Heart right ventricle (tissue), 16 donors: ENCODE measurements at regions of chr13 and their contacts with region 1.

Region 1: GRCh38 chr13:72700509-72700908 is 26.9 kb downstream of the MZT1 start:
- DNase-seq: no peak
- ATAC-seq: no peak
- H3K4me3 ChIP-seq: no peak overlapping the region
- H3K27ac ChIP-seq: no peak overlapping the region
- H3K4me1 ChIP-seq: no peaks in the 10 kb centered on the region
- H3K27me3 ChIP-seq: peaks cover 0 to 8% (median 0%) of the 10 kb centered on the region in 7 donors
- CTCF ChIP-seq: no peak

Region 2: DNA sequence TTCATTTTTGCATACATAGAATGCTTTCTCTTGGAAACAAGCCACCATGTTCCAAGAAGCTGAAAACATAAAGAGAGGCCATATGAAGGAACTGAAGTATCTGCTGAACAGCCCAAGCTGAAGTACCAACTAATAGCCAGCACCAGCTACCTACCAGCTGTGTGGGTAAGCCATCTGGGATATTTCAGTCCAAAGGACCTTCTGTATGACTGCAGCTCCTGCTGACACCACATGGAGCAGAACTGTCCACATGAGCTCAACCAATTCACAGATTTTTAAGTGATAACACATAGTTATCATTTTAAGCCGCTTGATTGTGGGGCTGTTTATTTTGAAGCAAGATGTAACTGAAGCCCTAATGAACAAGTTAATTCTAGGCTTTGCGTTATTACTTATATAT is 1971.1 kb before region 1 on chr13:
- intact Hi-C with region 1: loop called in 1 of 10 experiments (anchors 5 kb)
- DNase-seq: no peak
- ATAC-seq: no peak
- H3K4me3 ChIP-seq: no peak overlapping the region
- H3K27ac ChIP-seq: no peak overlapping the region
- H3K4me1 ChIP-seq: no peaks in the 10 kb centered on the region
- H3K27me3 ChIP-seq: no peaks in the 10 kb centered on the region
- CTCF ChIP-seq: no peak

Region 3: DNA sequence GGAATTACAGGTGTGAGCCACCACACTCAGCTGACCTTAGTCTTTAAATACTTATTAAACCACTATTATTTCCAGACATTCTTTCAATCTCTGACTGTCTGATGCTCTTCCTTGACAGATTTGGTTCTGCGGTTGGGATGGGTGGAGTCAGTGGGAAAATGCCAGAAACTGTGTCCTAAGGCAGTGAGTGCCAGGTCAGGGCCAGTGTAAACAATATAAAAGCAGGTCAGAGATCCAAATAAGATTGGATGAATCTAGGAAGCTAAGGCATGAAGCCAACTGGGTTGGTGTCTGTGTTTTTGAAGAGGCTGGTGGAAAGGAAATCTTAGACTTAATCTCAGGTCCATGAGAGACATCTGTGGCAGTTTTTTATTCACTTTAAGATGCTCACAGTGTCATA is 433.0 kb after region 1 on chr13:
- intact Hi-C with region 1: no loop called
- DNase-seq: no peak
- ATAC-seq: no peak
- H3K4me3 ChIP-seq: no peak overlapping the region
- H3K27ac ChIP-seq: no peak overlapping the region
- H3K4me1 ChIP-seq: no peaks in the 10 kb centered on the region
- H3K27me3 ChIP-seq: no peaks in the 10 kb centered on the region
- CTCF ChIP-seq: no peak